ENCODE measurements at regions of chr12 and their contacts with region 1.

Region 1: GRCh38 chr12:13255792-13256691 is 59.5 kb downstream of the EMP1 start:
- DNase-seq: peak; percentile 61
- ATAC-seq: peak; percentile 97
- H3K4me3 Mint-ChIP-seq: no peak overlapping the region
- H3K27ac Mint-ChIP-seq: no peak overlapping the region
- H3K4me1 Mint-ChIP-seq: peaks cover 2% of the 10 kb centered on the region
- H3K27me3 Mint-ChIP-seq: peaks cover 3% of the 10 kb centered on the region
- CTCF ChIP-seq: peak; percentile 50

Region 2: DNA sequence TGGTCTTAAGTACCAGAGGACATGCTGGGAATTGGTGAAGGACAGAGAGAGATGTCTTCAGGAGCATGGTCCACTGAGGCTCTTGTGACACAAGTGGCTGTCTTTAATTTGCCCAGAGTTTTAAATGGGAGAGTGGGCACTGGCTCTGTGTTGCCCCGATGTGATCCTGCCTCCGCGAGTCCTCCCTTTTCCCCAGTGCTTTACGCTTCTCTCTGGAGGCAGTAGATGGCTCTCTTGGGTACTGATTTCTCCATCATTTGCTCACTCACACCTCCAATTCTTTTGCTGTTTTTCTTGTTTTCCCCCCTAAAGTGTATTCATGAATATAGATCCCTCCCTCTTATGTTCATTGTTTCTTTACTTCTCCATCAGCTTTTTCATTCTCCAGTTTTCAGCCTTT is 14.8 kb after region 1 on chr12:
- CTCF ChIA-PET with region 1: interaction called, 12 read pairs
- POLR2A ChIA-PET with region 1: no interaction called
- intact Hi-C with region 1: no loop called
- DNase-seq: no peak
- ATAC-seq: no peak
- H3K4me3 Mint-ChIP-seq: no peak overlapping the region
- H3K27ac Mint-ChIP-seq: no peak overlapping the region
- H3K4me1 Mint-ChIP-seq: no peaks in the 10 kb centered on the region
- H3K27me3 Mint-ChIP-seq: peaks cover 20% of the 10 kb centered on the region
- CTCF ChIP-seq: no peak

Region 3: DNA sequence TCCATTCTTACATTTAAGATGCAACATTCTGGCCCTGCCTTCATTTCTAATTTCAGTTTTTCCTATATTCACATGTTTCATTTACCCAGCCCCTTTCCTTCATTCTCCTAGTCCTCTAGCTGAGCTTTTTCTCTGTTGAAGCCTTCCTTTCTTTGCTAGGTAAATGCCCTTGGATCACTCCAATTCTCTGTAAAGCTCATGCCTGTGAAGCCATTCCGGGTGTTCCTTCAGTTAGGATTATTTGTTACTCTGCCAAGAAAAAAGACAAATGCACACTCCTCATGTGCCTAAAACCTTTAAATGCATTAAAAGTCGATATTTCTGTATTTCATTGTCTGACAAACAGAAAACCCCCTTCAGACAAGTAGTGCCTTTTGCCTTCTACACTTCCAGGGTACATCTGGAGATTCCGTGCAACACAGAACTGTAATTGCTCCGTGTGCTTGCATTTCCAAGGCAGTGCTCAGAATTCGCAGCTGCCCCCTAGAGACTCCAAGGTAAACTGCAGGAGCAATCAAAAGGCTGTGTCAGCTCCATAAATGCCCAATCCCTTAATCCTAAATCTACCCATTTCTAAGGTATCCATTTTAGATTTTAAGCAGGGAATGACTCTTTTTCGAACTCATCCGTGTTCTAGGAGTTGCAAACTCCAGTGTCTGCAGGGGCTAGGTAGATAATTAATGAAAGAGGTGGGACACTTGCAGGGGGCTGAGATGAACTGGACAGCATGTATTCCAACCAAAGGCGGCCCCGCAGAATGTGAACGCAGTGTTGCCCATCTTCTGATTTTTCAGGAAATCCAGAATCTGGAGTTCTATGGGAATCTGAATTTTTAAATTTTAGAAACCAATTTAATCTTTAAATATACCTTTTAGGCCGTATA is 405.2 kb after region 1 on chr12:
- CTCF ChIA-PET with region 1: interaction called, 8 read pairs
- POLR2A ChIA-PET with region 1: no interaction called
- intact Hi-C with region 1: loop called (anchors 1 kb)
- DNase-seq: no peak
- ATAC-seq: peak; percentile 58
- H3K4me3 Mint-ChIP-seq: no peak overlapping the region
- H3K27ac Mint-ChIP-seq: no peak overlapping the region
- H3K4me1 Mint-ChIP-seq: no peaks in the 10 kb centered on the region
- H3K27me3 Mint-ChIP-seq: no peaks in the 10 kb centered on the region
- CTCF ChIP-seq: peak; percentile 68